Activated CD4-positive, alpha-beta memory T cell treated with anti-CD3 and anti-CD28 coated beads, Interleukin-2, amount 10 ng/mL, durations not matched to agents 7 days and 5 days (primary cell): ENCODE measurements at regions of chr17 and their contacts with region 1.

Region 1: DNA sequence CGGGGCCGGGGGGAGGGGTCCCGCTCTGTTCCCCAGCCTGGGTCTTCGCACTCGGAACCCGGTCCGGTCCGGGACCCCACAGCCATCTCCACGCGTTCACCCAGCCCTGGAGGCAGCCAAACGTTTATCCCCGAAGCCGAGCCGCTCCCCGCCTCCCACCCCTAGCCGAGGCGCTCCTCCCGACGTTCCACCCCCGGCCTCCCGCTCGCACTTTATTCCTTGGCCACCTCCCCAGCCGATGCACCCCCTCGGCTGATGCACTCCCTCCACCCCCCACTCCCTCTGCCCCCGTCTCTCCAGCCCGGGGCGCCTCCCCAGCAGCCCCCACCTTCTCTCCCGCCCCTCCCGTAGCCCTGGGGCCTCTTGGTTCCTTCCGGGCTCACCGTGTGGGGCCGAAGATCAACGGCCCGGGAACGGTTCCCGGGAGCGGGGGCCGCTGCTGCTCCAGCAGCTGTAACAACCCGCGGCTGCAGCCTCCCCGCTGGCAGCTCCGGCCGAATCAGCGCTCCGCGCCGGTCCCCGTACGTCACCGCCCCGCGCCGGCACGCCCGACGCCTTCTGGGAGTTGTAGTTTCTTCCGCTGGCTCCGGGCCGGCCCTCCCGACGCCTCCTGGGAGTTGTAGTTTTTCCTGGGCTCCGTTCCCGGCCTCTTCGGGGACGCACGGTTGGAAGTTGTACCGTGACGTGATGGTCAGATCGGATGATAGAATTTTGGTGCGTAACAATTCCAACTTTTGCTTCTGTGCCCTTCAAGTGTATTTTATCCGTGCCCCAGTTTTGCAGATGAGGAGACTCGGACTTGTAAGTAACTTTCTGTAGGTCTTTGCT is at the starts of genes LRRC3C and ORMDL3:
- DNase-seq: peak; percentile 93
- H3K4me3 Mint-ChIP-seq: peak within 1 kb of the TSS; percentile 83
- H3K27ac Mint-ChIP-seq: peak within 1 kb of the TSS; percentile 95
- H3K4me1 Mint-ChIP-seq: peaks cover 62% of the 10 kb centered on the region
- H3K27me3 Mint-ChIP-seq: no peaks in the 10 kb centered on the region
- total RNA-seq, gene LRRC3C: not detected
- total RNA-seq, gene ORMDL3: 104 to 111 TPM

Region 2: GRCh38 chr17:39813631-39814030 is 113.7 kb before region 1 on chr17:
- CTCF ChIA-PET with region 1: no interaction called
- POLR2A ChIA-PET with region 1: no interaction called
- DNase-seq: peak; percentile 62
- H3K4me3 Mint-ChIP-seq: peak overlapping the region; percentile 59
- H3K27ac Mint-ChIP-seq: peak overlapping the region; percentile 67
- H3K4me1 Mint-ChIP-seq: peaks cover 69% of the 10 kb centered on the region
- H3K27me3 Mint-ChIP-seq: no peaks in the 10 kb centered on the region

Region 3: GRCh38 chr17:39841134-39841683 is 86.1 kb before region 1 on chr17:
- CTCF ChIA-PET with region 1: no interaction called
- POLR2A ChIA-PET with region 1: no interaction called
- DNase-seq: no peak
- H3K4me3 Mint-ChIP-seq: no peak overlapping the region
- H3K27ac Mint-ChIP-seq: no peak overlapping the region
- H3K4me1 Mint-ChIP-seq: peaks cover 30% of the 10 kb centered on the region
- H3K27me3 Mint-ChIP-seq: no peaks in the 10 kb centered on the region

Region 4: GRCh38 chr17:39939588-39940419 is 12.5 kb after region 1 on chr17:
- CTCF ChIA-PET with region 1: interaction called, 6 read pairs
- POLR2A ChIA-PET with region 1: interaction called, 10 read pairs
- DNase-seq: peak; percentile 55
- H3K4me3 Mint-ChIP-seq: no peak overlapping the region
- H3K27ac Mint-ChIP-seq: peak overlapping the region; percentile 66
- H3K4me1 Mint-ChIP-seq: peaks cover 18% of the 10 kb centered on the region
- H3K27me3 Mint-ChIP-seq: no peaks in the 10 kb centered on the region